ENCODE measurements at regions of chr13 and their contacts with region 1.

Region 1: GRCh38 chr13:114226699-114227323 is 7.9 kb upstream of the CDC16 start:
- DNase-seq: peak; percentile 94
- ATAC-seq: peak; percentile 94
- H3K4me3 Mint-ChIP-seq: no peak overlapping the region
- H3K27ac Mint-ChIP-seq: no peak overlapping the region
- H3K4me1 Mint-ChIP-seq: peaks cover 48% of the 10 kb centered on the region
- H3K27me3 Mint-ChIP-seq: no peaks in the 10 kb centered on the region
- CTCF ChIP-seq: peak; percentile 86

Region 2: GRCh38 chr13:113816946-113817859 is 409.6 kb before region 1 on chr13:
- CTCF ChIA-PET with region 1: interaction called, 3 read pairs
- POLR2A ChIA-PET with region 1: no interaction called
- intact Hi-C with region 1: loop called (anchors 5 kb)
- DNase-seq: peak; percentile 95
- ATAC-seq: peak; percentile 90
- H3K4me3 Mint-ChIP-seq: peak overlapping the region; percentile 97
- H3K27ac Mint-ChIP-seq: peak overlapping the region; percentile 18
- H3K4me1 Mint-ChIP-seq: peaks cover 18% of the 10 kb centered on the region
- H3K27me3 Mint-ChIP-seq: peaks cover 3% of the 10 kb centered on the region
- CTCF ChIP-seq: peak; percentile 83

Region 3: DNA sequence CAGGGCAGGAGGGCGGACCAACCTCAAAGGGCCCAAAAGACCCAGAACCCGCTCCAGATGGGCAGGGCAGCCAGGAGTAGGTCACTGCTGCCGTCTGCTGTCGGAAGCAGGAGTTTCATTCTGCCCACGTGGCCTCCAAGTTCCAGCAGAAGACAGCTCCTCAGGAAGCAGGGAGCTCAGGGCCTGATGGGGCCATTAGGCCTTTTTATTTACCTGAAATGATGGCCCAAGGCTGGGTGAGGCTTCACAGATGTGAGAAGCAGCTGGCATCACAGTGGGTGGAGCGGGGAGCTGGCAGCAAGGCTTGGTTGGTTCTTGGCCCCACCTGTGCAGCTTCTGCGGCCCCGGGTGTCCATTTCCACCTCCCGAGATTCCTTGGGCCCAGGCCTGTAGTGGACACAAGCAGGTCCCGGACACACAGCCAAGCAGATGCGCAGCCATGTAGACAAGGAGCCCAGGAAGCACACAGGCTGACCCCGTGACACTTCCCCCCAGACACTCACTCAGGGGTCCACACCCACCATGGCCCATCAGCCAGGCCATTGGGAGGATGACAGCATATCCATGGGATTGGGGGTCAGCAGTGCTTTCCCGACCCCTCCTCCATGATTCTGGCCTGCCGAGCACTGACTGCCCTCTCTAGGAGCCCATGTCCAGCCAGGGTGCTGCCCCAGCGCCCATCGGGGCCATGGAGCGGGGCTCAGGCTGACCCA is 279.3 kb before region 1 on chr13:
- CTCF ChIA-PET with region 1: interaction called, 5 read pairs
- POLR2A ChIA-PET with region 1: no interaction called
- intact Hi-C with region 1: loop called (anchors 2 kb)
- DNase-seq: no peak
- ATAC-seq: no peak
- H3K4me3 Mint-ChIP-seq: no peak overlapping the region
- H3K27ac Mint-ChIP-seq: no peak overlapping the region
- H3K4me1 Mint-ChIP-seq: peaks cover 5% of the 10 kb centered on the region
- H3K27me3 Mint-ChIP-seq: no peaks in the 10 kb centered on the region
- CTCF ChIP-seq: no peak

Region 4: GRCh38 chr13:114065141-114065925 is 161.5 kb before region 1 on chr13:
- CTCF ChIA-PET with region 1: interaction called, 7 read pairs
- POLR2A ChIA-PET with region 1: interaction called, 3 read pairs
- intact Hi-C with region 1: loop called (anchors 5 kb)
- DNase-seq: peak; percentile 90
- ATAC-seq: peak; percentile 75
- H3K4me3 Mint-ChIP-seq: peak overlapping the region; percentile 66
- H3K27ac Mint-ChIP-seq: peak overlapping the region; percentile 94
- H3K4me1 Mint-ChIP-seq: peaks cover 66% of the 10 kb centered on the region
- H3K27me3 Mint-ChIP-seq: no peaks in the 10 kb centered on the region
- CTCF ChIP-seq: no peak

Region 5: GRCh38 chr13:114110091-114110829 is 116.6 kb before region 1 on chr13:
- CTCF ChIA-PET with region 1: interaction called, 20 read pairs
- POLR2A ChIA-PET with region 1: interaction called, 4 read pairs
- intact Hi-C with region 1: no loop called
- DNase-seq: peak; percentile 86
- ATAC-seq: peak; percentile 86
- H3K4me3 Mint-ChIP-seq: peak overlapping the region; percentile 71
- H3K27ac Mint-ChIP-seq: peak overlapping the region; percentile 89
- H3K4me1 Mint-ChIP-seq: peaks cover 79% of the 10 kb centered on the region
- H3K27me3 Mint-ChIP-seq: no peaks in the 10 kb centered on the region
- CTCF ChIP-seq: peak; percentile 23

Region 6: DNA sequence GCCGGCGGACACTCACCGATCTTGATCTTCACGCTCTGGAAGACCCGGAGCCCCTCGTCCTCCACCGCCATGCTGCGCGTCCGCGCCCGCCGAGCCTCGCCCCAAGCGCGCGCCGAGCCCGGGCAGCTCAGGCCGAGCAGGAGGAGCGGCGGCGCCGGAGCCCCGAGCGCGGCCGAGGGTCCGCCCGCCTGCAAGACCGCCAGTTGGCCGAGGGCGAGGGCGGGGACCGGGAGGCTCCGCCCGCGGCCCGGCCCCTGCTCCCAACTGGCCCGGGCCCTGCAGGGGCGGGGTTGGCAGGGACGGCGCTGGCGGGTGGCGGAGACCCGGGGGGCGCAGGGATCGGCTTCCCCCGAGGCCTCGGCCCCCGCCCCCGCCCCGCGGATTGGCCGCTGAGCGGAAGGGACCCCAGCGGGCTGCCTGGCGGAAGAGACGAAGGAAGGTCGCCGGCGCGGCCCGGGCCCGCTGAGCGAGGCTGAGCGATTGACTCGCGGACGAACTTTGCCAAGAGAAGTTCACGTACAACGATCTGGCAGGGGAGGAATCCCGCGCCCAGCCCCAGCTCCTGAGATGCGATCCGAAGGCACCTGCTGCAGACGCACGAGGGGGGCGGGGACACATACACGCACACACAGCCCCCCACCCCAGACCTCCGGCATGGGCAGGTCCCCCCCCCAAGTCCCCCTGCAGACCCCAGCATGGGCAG is 94.2 kb before region 1 on chr13 and contains the start of gene RASA3:
- CTCF ChIA-PET with region 1: interaction called, 7 read pairs
- POLR2A ChIA-PET with region 1: interaction called, 3 read pairs
- intact Hi-C with region 1: loop called (anchors 5 kb)
- DNase-seq: peak; percentile 71
- ATAC-seq: peak; percentile 56
- H3K4me3 Mint-ChIP-seq: peak within 1 kb of the TSS; percentile 99
- H3K27ac Mint-ChIP-seq: peak within 1 kb of the TSS; percentile 91
- H3K4me1 Mint-ChIP-seq: peaks cover 30% of the 10 kb centered on the region
- H3K27me3 Mint-ChIP-seq: no peaks in the 10 kb centered on the region
- CTCF ChIP-seq: no peak
- total RNA-seq, gene RASA3: 28.9 to 32.3 TPM

Region 7: GRCh38 chr13:114143806-114144605 is 82.8 kb before region 1 on chr13:
- CTCF ChIA-PET with region 1: interaction called, 7 read pairs
- POLR2A ChIA-PET with region 1: interaction called, 5 read pairs
- intact Hi-C with region 1: loop called (anchors 5 kb)
- DNase-seq: peak; percentile 76
- ATAC-seq: peak; percentile 50
- H3K4me3 Mint-ChIP-seq: no peak overlapping the region
- H3K27ac Mint-ChIP-seq: peak overlapping the region; percentile 68
- H3K4me1 Mint-ChIP-seq: peaks cover 41% of the 10 kb centered on the region
- H3K27me3 Mint-ChIP-seq: no peaks in the 10 kb centered on the region
- CTCF ChIP-seq: peak; percentile 63

Region 8: GRCh38 chr13:114286808-114287207 is 60.0 kb after region 1 on chr13:
- CTCF ChIA-PET with region 1: no interaction called
- POLR2A ChIA-PET with region 1: no interaction called
- intact Hi-C with region 1: no loop called
- DNase-seq: no peak
- ATAC-seq: no peak
- H3K4me3 Mint-ChIP-seq: no peak overlapping the region
- H3K27ac Mint-ChIP-seq: no peak overlapping the region
- H3K4me1 Mint-ChIP-seq: peaks cover 36% of the 10 kb centered on the region
- H3K27me3 Mint-ChIP-seq: no peaks in the 10 kb centered on the region
- CTCF ChIP-seq: no peak

Measured in activated CD8-positive, alpha-beta T cell treated with anti-CD3 and anti-CD28 coated beads for 36 hours (primary cell).